ENCODE measurements at regions of chr2 and their contacts with region 1.

Region 1: GRCh38 chr2:96265840-96266679 is at the starts of genes CIAO1 and TMEM127:
- DNase-seq: peak; percentile 99
- H3K4me3 Mint-ChIP-seq: peak within 1 kb of the TSS; percentile 96
- H3K27ac Mint-ChIP-seq: peak within 1 kb of the TSS; percentile 94
- H3K4me1 Mint-ChIP-seq: peaks cover 33% of the 10 kb centered on the region
- H3K27me3 Mint-ChIP-seq: no peaks in the 10 kb centered on the region
- total RNA-seq, gene CIAO1: 111 and 115 TPM in 2 replicates
- total RNA-seq, gene TMEM127: 29.7 and 30.1 TPM in 2 replicates

Region 2: GRCh38 chr2:96208143-96209010 is 57.7 kb before region 1 on chr2 and contains the start of gene STARD7:
- intact Hi-C with region 1: loop called (anchors 1 kb)
- DNase-seq: peak; percentile 98
- H3K4me3 Mint-ChIP-seq: peak within 1 kb of the TSS; percentile 96
- H3K27ac Mint-ChIP-seq: peak within 1 kb of the TSS; percentile 94
- H3K4me1 Mint-ChIP-seq: peaks cover 57% of the 10 kb centered on the region
- H3K27me3 Mint-ChIP-seq: no peaks in the 10 kb centered on the region
- total RNA-seq, gene STARD7: 216 and 229 TPM in 2 replicates

Region 3: GRCh38 chr2:96320728-96321622 is 54.9 kb after region 1 on chr2:
- intact Hi-C with region 1: loop called (anchors 1 kb)
- DNase-seq: peak; percentile 26
- H3K4me3 Mint-ChIP-seq: peak overlapping the region; percentile 88
- H3K27ac Mint-ChIP-seq: peak overlapping the region; percentile 85
- H3K4me1 Mint-ChIP-seq: peaks cover 63% of the 10 kb centered on the region
- H3K27me3 Mint-ChIP-seq: no peaks in the 10 kb centered on the region

Region 4: DNA sequence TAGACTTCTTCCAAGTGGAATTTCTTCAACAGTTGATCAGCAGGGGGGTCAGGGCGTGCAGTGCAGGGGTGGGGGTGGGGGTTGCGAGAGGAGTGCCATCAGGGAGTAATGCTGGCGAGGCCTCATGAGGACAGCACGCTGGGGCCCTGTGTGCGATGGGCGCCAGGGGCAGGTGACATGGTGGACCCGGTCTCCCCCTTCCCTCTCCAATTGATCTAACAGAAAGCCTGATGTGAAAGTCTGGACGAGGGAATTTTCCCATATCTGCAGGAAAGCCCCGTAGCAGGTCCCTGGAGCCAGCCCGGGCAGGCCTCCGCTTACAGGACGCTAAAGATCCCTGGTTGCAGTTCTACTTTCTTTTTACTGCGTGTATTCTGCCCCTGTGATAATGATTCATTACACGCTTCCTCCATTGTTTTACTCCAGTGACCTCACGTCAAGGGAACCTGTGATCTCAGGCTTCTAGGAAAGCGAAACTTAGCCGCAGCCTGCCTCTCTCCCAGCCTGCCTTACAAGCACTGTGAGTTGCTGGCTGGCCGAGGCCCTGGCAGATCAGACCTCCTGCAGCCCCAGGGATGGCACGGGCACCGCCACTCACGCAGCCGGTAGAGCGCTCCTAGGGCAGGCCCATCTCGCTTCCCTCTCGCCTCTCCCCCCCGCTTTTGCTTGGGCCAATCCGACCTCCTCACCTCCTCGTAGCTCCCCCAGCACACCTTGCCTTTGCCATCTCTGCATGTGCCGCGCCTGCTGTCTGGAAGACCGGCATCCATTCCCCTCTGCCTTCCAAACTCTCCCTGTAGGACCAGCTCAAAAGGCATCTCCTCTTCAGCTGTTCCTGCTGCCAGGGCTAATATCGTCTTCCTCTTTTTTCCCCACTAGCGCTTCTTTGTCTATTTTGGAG is 219.9 kb after region 1 on chr2:
- intact Hi-C with region 1: loop called (anchors 2 kb)
- DNase-seq: peak; percentile 88
- H3K4me3 Mint-ChIP-seq: peak overlapping the region; percentile 92
- H3K27ac Mint-ChIP-seq: peak overlapping the region; percentile 96
- H3K4me1 Mint-ChIP-seq: peaks cover 63% of the 10 kb centered on the region
- H3K27me3 Mint-ChIP-seq: peaks cover 5% of the 10 kb centered on the region

Region 5: GRCh38 chr2:96594691-96595152 is 328.7 kb after region 1 on chr2:
- intact Hi-C with region 1: no loop called
- DNase-seq: peak; percentile 38
- H3K4me3 Mint-ChIP-seq: peak overlapping the region; percentile 43
- H3K27ac Mint-ChIP-seq: peak overlapping the region; percentile 91
- H3K4me1 Mint-ChIP-seq: peaks cover 51% of the 10 kb centered on the region
- H3K27me3 Mint-ChIP-seq: no peaks in the 10 kb centered on the region

Measured in activated T-helper 1 cell treated with anti-CD3 and anti-CD28 coated beads, Interleukin-12 subunit alpha, Interleukin-12 subunit beta, Interleukin-2, Interleukin-4 antibody, amounts not matched to agents 30 ng/mL and 10 ng/mL and 1 ng/mL, durations not matched to agents 14 hours and 24 hours and 36 hours (primary cell).